Activated B cell treated with CpG ODN at 0.5 μM for 24 hours (primary cell): ENCODE measurements at regions of chr11 and their contacts with region 1.

Region 1: DNA sequence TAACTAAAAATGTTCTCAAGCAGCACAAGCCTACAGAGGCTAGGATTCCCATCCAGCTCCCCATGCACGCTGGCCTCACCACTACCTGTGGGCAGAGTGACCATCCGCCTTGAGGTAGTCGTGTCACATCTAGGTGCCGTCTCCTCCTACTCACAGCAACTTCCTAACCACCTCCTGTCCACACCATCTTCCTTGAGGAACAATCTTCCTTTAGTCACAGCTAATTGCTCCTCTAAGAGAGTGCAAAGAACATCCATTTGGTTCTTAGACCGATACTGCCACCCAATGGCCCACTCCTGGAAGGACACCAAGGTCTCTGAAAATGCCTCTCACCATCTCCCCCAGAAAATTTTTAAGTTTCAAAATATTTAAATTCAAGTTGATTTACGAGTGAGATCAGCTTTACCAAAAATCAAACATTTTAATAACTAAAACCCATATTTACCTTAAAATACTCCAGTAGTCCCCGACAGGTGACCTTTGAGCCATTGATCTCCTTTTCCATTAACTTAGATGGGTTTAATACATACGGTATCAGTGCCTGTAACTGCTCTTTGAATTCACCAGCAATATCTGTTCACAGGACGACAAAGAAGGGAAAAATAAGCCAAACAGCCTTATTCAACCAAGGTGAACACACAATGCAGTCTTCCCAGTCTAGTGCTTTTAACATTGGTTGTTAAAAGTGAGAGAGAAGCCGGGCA is 21.7 kb upstream of the PLAAT3 start:
- DNase-seq: peak; percentile 23
- ATAC-seq: peak; percentile 72
- H3K4me3 Mint-ChIP-seq: no peak overlapping the region
- H3K27ac Mint-ChIP-seq: no peak overlapping the region
- H3K4me1 Mint-ChIP-seq: peaks cover 9% of the 10 kb centered on the region
- H3K27me3 Mint-ChIP-seq: no peaks in the 10 kb centered on the region
- CTCF ChIP-seq: no peak

Region 2: GRCh38 chr11:63032457-63032856 is 603.5 kb before region 1 on chr11:
- CTCF ChIA-PET with region 1: interaction called, 3 read pairs
- POLR2A ChIA-PET with region 1: no interaction called
- intact Hi-C with region 1: loop called (anchors 2 kb)
- DNase-seq: no peak
- ATAC-seq: no peak
- H3K4me3 Mint-ChIP-seq: no peak overlapping the region
- H3K27ac Mint-ChIP-seq: no peak overlapping the region
- H3K4me1 Mint-ChIP-seq: no peaks in the 10 kb centered on the region
- H3K27me3 Mint-ChIP-seq: peaks cover 39% of the 10 kb centered on the region
- CTCF ChIP-seq: no peak

Region 3: GRCh38 chr11:63738720-63739360 is 102.9 kb after region 1 on chr11:
- CTCF ChIA-PET with region 1: interaction called, 11 read pairs
- POLR2A ChIA-PET with region 1: no interaction called
- intact Hi-C with region 1: loop called (anchors 1 kb)
- DNase-seq: peak; percentile 37
- ATAC-seq: no peak
- H3K4me3 Mint-ChIP-seq: no peak overlapping the region
- H3K27ac Mint-ChIP-seq: no peak overlapping the region
- H3K4me1 Mint-ChIP-seq: peaks cover 2% of the 10 kb centered on the region
- H3K27me3 Mint-ChIP-seq: no peaks in the 10 kb centered on the region
- CTCF ChIP-seq: peak; percentile 100